ENCODE measurements at regions of chr19 and their contacts with region 1.

Region 1: DNA sequence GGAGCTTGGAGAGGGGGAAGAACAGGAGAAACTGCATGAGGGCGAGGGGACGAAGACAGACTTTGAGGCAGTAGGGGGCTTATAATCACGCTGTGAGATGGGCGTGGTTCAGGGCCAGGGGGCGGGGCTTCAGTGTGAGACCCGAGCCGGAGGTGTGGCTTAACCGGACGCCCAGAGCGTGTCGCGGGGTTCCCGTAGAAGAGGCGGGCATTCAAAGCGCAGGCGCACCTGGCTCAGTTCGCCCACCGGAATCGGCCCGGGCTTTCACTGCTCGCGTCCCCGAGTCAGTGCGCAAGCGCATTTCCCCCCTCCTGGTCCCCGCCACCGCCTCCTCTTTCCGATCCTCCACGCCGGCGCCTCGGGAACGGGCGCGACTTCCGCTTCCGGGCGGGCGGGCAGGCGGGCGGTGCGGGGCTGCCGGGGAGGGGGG is 225 bp upstream of the ZNF865 start:
- DNase-seq: peak; percentile 65
- H3K4me3 ChIP-seq: peak overlapping the region; percentile 96
- CTCF ChIP-seq: no peak

Region 2: GRCh38 chr19:55459551-55459949 is 145.7 kb before region 1 on chr19:
- CTCF ChIA-PET with region 1: no interaction called
- POLR2A ChIA-PET with region 1: no interaction called
- DNase-seq: no peak
- H3K4me3 ChIP-seq: no peak overlapping the region
- CTCF ChIP-seq: no peak

Region 3: DNA sequence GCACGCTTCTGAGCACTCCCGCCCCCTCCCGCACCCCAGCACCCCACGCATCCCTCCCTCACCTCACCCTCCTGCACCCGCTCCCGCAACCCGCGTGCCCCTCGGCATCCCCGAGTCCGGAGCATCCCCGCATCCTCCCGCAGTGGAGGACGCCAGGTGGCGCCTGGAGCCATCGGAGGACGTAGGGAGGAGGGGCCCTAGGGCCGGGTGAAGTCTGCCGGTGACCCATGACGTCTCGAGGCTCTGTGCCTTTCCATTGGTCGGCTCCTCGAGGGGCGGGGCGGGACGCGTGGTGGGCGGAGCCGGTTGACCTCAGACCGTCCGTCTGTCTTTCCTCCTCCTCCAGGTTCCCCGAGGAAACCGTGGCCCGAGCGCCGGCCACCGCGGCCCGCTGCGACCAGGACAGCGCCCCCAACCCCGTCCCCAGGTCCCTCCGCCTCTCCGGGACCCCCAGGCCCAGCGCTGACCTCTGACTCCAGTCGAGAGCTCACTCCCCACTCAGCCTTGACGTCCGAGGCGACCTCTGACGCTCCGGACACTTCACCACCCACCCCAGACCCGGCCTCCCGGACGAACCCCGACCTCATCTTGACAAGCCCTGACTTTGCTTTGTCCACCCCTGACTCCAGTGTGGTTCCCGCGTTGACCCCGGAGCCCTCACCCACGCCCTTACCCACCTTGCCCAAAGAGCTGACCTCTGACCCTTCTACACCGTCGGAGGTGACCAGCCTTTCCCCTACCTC is 88.2 kb before region 1 on chr19:
- CTCF ChIA-PET with region 1: interaction called, 70 read pairs
- POLR2A ChIA-PET with region 1: interaction called, 5 read pairs
- DNase-seq: peak; percentile 40
- H3K4me3 ChIP-seq: peak overlapping the region; percentile 46
- CTCF ChIP-seq: peak; percentile 99

Region 4: GRCh38 chr19:55624109-55625003 is 19.1 kb after region 1 on chr19 and contains the start of gene ZNF784:
- CTCF ChIA-PET with region 1: interaction called, 43 read pairs
- POLR2A ChIA-PET with region 1: interaction called, 6 read pairs
- DNase-seq: no peak
- H3K4me3 ChIP-seq: peak within 1 kb of the TSS; percentile 78
- CTCF ChIP-seq: no peak

Region 5: DNA sequence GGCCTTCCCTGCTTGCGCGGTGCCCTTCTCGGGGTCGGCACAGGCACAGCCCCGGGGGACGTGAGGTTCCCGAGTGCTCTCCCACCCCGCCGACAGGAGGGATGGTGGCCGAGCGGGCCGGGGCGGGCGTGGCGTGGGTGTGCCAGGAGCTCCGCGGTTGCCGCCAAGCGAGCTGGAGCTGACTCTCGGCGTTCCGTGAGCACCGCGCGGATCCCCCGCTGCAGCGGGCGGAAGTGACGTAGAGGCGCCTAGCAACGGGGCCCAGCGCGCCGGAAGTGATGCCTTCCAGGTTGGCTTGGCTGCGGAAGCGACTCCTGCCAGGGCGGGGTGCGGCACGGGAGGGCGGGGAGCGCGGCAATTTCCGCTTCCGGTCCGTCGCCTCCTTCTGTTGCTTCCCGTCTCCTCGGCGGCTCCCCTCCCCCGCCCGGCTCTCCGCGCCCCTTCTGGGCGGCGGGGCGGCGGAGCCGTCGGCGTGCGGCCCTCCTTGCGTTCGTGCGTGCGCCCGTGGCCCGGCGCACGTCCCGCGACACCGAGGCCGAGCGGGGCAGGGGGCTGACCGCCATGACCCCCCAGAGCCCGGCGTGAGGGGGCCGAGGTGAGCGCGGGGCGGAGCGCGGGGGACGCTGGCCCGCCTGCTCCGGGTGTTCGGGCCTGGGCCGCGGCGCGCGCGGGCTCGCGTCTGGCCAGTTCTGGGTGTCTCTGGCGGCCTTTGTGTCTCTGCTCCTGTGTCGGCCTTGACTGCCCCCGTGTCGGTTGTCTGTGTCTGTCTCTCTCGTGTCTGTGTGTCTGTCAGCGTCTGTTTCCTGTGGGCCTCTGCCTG is 69.8 kb after region 1 on chr19 and contains the start of gene EPN1:
- CTCF ChIA-PET with region 1: no interaction called
- POLR2A ChIA-PET with region 1: no interaction called
- DNase-seq: peak; percentile 59
- H3K4me3 ChIP-seq: peak within 1 kb of the TSS; percentile 66
- CTCF ChIP-seq: no peak

Region 6: DNA sequence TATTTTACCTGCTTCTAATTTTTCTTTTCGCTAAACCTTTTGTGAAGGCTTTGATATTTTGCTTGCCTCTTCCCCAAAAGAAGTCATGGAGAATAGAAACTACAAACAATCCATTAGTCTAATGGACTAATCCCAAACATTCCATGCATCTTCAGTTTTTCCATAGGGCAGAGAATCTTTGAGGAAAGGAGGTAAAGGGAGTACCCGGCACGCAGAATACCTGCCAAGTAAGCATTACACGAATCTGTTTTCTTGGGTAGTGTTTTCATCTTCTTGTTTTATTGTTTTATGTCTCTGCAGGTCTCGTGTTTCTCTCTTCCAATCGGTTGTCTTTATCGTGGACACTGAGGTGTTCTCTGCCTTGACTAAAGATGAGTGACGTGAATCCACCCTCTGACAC is 342.3 kb after region 1 on chr19 and contains the start of gene NLRP8:
- CTCF ChIA-PET with region 1: no interaction called
- POLR2A ChIA-PET with region 1: no interaction called
- DNase-seq: no peak
- H3K4me3 ChIP-seq: no peak within 1 kb of the TSS
- CTCF ChIP-seq: no peak

Measured in AG04449 (cell line).